ENCODE measurements at regions of chr9 and their contacts with region 1.

Region 1: GRCh38 chr9:92133949-92134604 is 18.9 kb upstream of the SPTLC1 start:
- DNase-seq: peak; percentile 82
- H3K4me3 Mint-ChIP-seq: peak overlapping the region; percentile 66
- H3K27ac Mint-ChIP-seq: no peak overlapping the region
- H3K4me1 Mint-ChIP-seq: peaks cover 9% of the 10 kb centered on the region
- H3K27me3 Mint-ChIP-seq: peaks cover 13% of the 10 kb centered on the region
- CTCF ChIP-seq: peak; percentile 96

Region 2: DNA sequence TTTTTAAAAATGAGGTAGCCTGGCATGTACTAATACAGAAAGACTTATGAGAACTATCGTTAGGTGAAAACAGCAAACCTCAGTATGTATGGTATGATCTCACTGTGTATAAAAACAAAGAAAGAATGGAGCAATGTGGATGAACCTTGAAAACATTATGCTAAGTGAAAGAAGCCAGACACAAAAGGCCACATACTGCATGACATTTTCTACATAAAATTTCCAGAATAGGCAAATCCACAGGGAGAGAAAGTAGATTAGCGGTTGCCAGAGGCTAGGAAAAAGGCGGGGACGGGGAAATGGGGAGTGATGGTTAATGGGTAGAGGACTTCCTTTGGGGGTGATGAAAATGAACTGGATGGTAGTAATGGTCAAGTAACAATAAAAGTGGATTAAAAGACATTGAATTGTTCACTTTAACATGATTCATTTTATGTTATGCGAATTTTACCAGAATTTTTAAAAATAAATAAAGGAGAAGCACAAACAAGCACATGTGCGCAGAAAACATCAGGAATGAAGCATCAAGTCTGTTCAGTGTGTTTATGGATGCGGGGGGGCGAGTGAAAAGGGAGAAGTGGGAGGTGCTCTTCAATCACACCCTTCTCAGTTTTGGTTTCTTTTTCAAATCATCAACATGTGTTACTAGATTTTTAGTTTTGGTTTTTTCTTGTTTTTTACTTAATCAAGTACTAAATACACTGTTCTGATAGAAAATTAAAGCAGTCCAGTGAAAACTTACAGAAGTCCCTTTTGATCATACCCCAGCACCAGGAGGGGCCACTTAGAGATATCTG is 200.3 kb before region 1 on chr9:
- CTCF ChIA-PET with region 1: no interaction called
- POLR2A ChIA-PET with region 1: no interaction called
- intact Hi-C with region 1: no loop called
- DNase-seq: no peak
- H3K4me3 Mint-ChIP-seq: no peak overlapping the region
- H3K27ac Mint-ChIP-seq: no peak overlapping the region
- H3K4me1 Mint-ChIP-seq: no peaks in the 10 kb centered on the region
- H3K27me3 Mint-ChIP-seq: no peaks in the 10 kb centered on the region
- CTCF ChIP-seq: no peak

Region 3: DNA sequence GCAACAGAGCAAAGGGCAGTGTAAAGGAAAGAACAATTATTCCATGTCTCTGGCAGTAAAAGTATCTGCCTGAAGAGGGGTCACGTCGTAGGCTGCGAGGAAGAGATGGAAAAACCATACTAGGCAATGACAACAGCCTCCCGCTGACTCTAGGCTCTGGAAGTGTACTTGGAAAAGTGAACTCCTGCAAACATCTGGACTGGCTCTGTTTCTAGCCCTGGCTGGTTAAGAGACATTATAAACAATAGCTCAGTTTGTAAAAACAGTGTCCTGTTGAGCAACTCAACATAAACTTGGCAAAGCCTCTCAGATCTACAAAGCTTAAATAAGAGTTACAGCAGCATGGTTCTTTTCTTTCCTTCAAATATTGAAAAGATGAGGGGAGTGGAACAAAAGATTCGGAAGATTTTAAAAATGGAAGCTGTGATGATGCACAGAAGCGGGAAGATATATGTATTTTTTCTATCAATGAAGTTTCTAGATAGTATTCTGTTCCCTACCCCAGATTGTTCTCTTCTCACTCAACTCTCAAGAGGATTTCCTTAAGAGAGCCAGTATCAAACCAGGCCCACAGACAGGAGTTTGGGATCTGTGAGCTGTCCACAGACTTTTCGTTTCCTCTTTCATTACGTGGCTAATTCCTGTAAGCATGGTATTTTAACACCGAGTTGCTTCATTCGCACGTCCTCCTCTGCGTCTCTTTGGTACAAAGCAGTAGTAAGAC is 98.2 kb before region 1 on chr9:
- CTCF ChIA-PET with region 1: no interaction called
- POLR2A ChIA-PET with region 1: no interaction called
- intact Hi-C with region 1: no loop called
- DNase-seq: no peak
- H3K4me3 Mint-ChIP-seq: no peak overlapping the region
- H3K27ac Mint-ChIP-seq: peak overlapping the region; percentile 56
- H3K4me1 Mint-ChIP-seq: no peaks in the 10 kb centered on the region
- H3K27me3 Mint-ChIP-seq: no peaks in the 10 kb centered on the region
- CTCF ChIP-seq: no peak

Region 4: DNA sequence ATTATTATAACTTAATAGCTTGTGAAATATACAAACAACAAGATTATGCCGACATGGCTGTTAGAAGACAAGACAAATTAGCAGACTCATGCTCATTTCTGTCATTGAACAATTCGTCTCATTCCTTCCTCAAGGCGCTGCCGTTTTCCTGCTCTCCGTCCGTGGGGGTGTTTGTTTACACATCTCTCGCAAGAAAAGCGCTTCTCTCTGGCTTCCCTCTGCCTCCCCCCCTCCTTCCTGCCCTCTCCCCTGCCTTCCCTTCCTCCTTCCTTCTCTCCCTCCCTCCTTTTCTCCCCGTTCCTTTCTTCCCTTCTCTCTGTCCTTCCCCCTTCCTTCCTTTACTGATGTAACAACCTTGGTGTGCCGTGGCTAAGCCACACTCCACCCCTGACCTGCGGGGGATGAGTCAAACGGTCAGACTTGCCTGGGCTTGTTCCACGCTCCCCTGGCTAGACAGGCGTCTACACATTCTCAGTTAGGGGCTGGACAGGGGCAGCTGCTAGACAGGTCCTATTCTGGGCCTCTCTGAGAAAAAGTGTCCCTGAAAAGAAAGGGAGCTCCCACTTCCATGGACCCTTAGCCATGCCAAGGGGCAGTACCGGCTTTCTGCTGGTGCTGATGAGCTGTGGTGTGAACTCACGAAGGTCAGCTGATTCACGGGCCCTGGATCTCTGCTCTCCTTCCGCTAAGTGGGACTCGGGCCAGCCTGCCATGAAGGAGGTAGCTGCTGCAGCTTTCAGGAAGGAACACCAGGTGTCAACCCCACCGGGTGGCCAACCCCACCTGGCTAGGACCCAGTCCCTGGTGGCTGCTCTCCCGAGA is 13.2 kb after region 1 on chr9:
- CTCF ChIA-PET with region 1: interaction called, 50 read pairs
- POLR2A ChIA-PET with region 1: interaction called, 6 read pairs
- intact Hi-C with region 1: no loop called
- DNase-seq: peak; percentile 94
- H3K4me3 Mint-ChIP-seq: peak overlapping the region; percentile 58
- H3K27ac Mint-ChIP-seq: peak overlapping the region; percentile 94
- H3K4me1 Mint-ChIP-seq: peaks cover 35% of the 10 kb centered on the region
- H3K27me3 Mint-ChIP-seq: no peaks in the 10 kb centered on the region
- CTCF ChIP-seq: peak; percentile 11

Region 5: DNA sequence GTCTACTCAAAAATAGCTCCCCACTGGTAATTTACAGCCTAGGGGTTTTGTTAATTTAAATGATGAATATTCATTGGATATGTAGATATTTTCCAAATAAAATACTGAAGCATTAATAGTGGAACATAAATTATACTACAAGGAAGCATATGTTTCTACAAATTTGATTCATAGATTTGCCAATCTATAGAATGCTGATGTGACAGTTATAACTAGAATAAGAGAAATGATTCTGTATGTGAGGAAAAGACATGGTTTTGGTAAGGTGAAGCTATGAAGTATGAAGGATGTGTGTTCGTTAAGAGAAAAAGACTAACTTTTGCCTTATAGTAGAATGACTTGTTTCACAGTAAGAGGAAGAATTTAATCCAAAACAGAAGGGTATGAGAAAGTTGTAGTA is 98.1 kb after region 1 on chr9:
- CTCF ChIA-PET with region 1: interaction called, 153 read pairs
- POLR2A ChIA-PET with region 1: interaction called, 4 read pairs
- intact Hi-C with region 1: no loop called
- DNase-seq: no peak
- H3K4me3 Mint-ChIP-seq: no peak overlapping the region
- H3K27ac Mint-ChIP-seq: no peak overlapping the region
- H3K4me1 Mint-ChIP-seq: no peaks in the 10 kb centered on the region
- H3K27me3 Mint-ChIP-seq: no peaks in the 10 kb centered on the region
- CTCF ChIP-seq: no peak

Region 6: GRCh38 chr9:92438900-92439526 is 304.9 kb after region 1 on chr9:
- CTCF ChIA-PET with region 1: no interaction called
- POLR2A ChIA-PET with region 1: no interaction called
- intact Hi-C with region 1: loop called (anchors 10 kb)
- DNase-seq: peak; percentile 9
- H3K4me3 Mint-ChIP-seq: no peak overlapping the region
- H3K27ac Mint-ChIP-seq: peak overlapping the region; percentile 68
- H3K4me1 Mint-ChIP-seq: peaks cover 7% of the 10 kb centered on the region
- H3K27me3 Mint-ChIP-seq: no peaks in the 10 kb centered on the region
- CTCF ChIP-seq: peak; percentile 50